ENCODE measurements at regions of chr10 and their contacts with region 1.

Region 1: DNA sequence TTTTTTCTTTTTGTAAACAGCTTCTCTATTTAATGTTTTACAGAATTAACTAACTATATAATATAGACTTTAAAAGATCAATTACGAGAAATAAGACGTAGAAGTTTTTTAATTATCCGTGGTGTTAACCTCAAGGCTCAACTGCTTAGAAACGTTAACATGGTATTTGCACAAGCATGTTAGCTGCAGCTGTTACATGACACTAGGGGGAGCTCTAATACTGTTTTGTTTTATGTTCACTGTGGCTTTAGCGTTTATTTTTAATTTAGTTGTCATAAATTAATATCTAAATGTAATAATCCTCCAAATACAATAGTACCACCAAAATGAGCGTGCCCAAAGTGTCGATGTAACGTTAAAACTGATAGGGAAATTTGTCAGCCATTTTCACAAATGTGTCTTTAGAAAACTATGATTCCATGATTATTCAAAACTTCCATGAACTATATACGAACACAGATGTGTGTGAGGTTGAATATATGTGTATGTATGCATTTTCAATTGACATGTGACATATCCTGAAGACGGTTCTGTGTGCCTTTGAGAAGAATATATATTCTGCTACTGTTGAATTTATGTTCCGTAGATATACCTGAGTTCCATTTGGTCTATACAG is 828.8 kb upstream of the MBL2 start:
- DNase-seq: peak; percentile 16
- H3K4me3 ChIP-seq: no peak overlapping the region
- H3K27ac ChIP-seq: no peak overlapping the region
- H3K4me1 ChIP-seq: peaks cover 21% of the 10 kb centered on the region
- H3K27me3 ChIP-seq: no peaks in the 10 kb centered on the region
- CTCF ChIP-seq: peak; percentile 84 to 88

Region 2: GRCh38 chr10:53209944-53210611 is 391.3 kb before region 1 on chr10:
- CTCF ChIA-PET with region 1: no interaction called
- dilution Hi-C with region 1: no loop called
- in situ Hi-C with region 1: no loop called
- intact Hi-C with region 1: loop called (anchors 2 kb)
- DNase-seq: peak; percentile 39
- H3K4me3 ChIP-seq: no peak overlapping the region
- H3K27ac ChIP-seq: no peak overlapping the region
- H3K4me1 ChIP-seq: no peaks in the 10 kb centered on the region
- H3K27me3 ChIP-seq: no peaks in the 10 kb centered on the region
- CTCF ChIP-seq: peak; percentile 64 to 66

Region 3: DNA sequence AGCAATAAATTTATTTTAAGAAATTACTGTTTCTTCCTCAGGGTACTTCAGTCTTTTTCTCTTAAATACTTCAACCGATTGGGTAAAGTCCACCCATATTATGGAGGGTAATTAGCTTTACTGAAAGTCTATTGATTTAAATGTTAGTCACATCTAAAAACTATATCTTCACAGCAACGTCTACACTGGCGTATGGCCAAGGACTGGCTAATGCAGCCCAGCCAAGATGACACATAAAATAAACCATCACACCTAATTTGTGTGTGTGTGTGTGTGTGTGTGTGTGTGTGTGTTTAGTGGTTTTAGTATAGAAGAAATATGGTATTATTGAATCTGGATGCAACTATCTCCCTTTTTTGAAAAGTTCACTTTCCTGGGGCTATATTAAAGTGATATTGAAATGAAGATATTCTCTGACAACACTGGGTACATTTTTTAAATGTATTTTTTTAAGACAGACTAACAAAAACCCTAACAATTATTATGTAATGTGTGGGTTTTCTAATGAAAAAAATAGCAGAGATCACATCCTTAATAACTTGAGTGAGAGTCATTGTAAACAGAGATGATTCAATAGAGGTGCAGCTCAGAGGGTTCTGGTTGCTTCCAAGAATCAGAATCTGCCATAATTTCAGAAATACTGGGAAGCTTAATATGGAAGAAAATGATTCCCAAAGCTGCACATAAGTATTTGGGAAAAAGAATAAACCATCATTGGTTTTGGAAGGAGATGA is 244.6 kb before region 1 on chr10:
- CTCF ChIA-PET with region 1: no interaction called
- dilution Hi-C with region 1: no loop called
- in situ Hi-C with region 1: no loop called
- intact Hi-C with region 1: loop called (anchors 5 kb)
- DNase-seq: peak; percentile 73
- H3K4me3 ChIP-seq: no peak overlapping the region
- H3K27ac ChIP-seq: no peak overlapping the region
- H3K4me1 ChIP-seq: peaks cover 23% of the 10 kb centered on the region
- H3K27me3 ChIP-seq: no peaks in the 10 kb centered on the region
- CTCF ChIP-seq: no peak

Region 4: GRCh38 chr10:53619671-53620070 is 18.3 kb after region 1 on chr10:
- CTCF ChIA-PET with region 1: no interaction called
- dilution Hi-C with region 1: no loop called
- in situ Hi-C with region 1: no loop called
- intact Hi-C with region 1: no loop called
- DNase-seq: peak; percentile 68
- H3K4me3 ChIP-seq: no peak overlapping the region
- H3K27ac ChIP-seq: peak overlapping the region; percentile 76
- H3K4me1 ChIP-seq: peaks cover 7% of the 10 kb centered on the region
- H3K27me3 ChIP-seq: no peaks in the 10 kb centered on the region
- CTCF ChIP-seq: no peak

Region 5: GRCh38 chr10:53839440-53840039 is 238.2 kb after region 1 on chr10:
- CTCF ChIA-PET with region 1: interaction called, 6 read pairs
- dilution Hi-C with region 1: no loop called
- in situ Hi-C with region 1: no loop called
- intact Hi-C with region 1: loop called (anchors 5 kb)
- DNase-seq: peak; percentile 8
- H3K4me3 ChIP-seq: no peak overlapping the region
- H3K27ac ChIP-seq: no peak overlapping the region
- H3K4me1 ChIP-seq: peaks cover 5% of the 10 kb centered on the region
- H3K27me3 ChIP-seq: no peaks in the 10 kb centered on the region
- CTCF ChIP-seq: peak; percentile 41 to 59

Region 6: GRCh38 chr10:53997953-53998352 is 396.6 kb after region 1 on chr10:
- CTCF ChIA-PET with region 1: no interaction called
- dilution Hi-C with region 1: no loop called
- in situ Hi-C with region 1: no loop called
- intact Hi-C with region 1: loop called (anchors 2 kb)
- DNase-seq: peak; percentile 0
- H3K4me3 ChIP-seq: no peak overlapping the region
- H3K27ac ChIP-seq: no peak overlapping the region
- H3K4me1 ChIP-seq: no peaks in the 10 kb centered on the region
- H3K27me3 ChIP-seq: no peaks in the 10 kb centered on the region
- CTCF ChIP-seq: peak in 1 of 2 donors; percentile 44

Region 7: GRCh38 chr10:54402576-54402975 is 801.2 kb after region 1 on chr10:
- CTCF ChIA-PET with region 1: interaction called, 3 read pairs
- dilution Hi-C with region 1: no loop called
- in situ Hi-C with region 1: no loop called
- intact Hi-C with region 1: loop called (anchors 2 kb)
- DNase-seq: peak; percentile 32
- H3K4me3 ChIP-seq: no peak overlapping the region
- H3K27ac ChIP-seq: no peak overlapping the region
- H3K4me1 ChIP-seq: no peaks in the 10 kb centered on the region
- H3K27me3 ChIP-seq: peaks cover 2% of the 10 kb centered on the region
- CTCF ChIP-seq: peak; percentile 31 to 59

Measured in mammary epithelial cell (primary cell).